Panc1 (cell line): ENCODE measurements at regions of chr14 and their contacts with region 1.

Region 1: GRCh38 chr14:54446161-54446693 is 5.1 kb upstream of the CNIH1 start:
- DNase-seq: no peak
- ATAC-seq: no peak
- H3K4me3 ChIP-seq: no peak overlapping the region
- H3K27ac ChIP-seq: no peak overlapping the region
- H3K4me1 ChIP-seq: no peaks in the 10 kb centered on the region; the same call in 1 of the 2 replicates
- H3K27me3 ChIP-seq: no peaks in the 10 kb centered on the region
- CTCF ChIP-seq: no peak

Region 2: DNA sequence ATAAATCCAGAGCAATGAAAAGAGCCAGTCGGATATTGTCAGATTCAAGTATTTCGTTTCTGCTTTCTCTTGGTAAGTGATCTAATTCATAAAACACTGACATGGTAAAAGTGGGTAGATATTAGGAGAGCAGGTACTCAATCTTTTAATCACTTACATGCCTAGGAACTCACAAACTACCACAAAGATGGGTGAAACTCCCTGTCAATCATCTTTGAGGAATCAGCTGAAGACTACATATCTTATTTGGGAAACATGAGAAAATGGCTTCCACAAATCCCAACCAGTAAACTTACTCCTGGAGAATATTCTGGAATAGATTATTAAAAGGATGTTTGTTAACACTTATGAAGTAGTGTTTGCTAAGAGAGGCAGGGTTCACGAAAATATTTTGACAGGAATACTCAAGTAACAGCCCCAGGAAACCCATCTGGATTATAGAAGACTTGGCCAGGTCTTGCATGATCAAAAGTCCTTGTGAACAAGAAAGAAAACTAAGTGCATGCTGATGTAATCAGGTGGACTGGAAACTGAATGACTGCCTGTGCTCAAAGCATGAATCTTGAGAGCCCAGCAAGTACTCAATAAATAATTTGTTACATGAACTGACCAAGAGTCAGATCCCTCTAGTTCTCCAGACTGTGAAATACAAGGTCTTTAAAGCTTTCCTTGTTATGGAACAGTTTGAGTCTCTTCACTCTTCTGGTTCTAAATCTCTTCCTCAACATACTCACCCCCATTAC is 20.5 kb before region 1 on chr14:
- CTCF ChIA-PET with region 1: interaction called, 12 read pairs
- POLR2A ChIA-PET with region 1: no interaction called
- in situ Hi-C with region 1: no loop called
- intact Hi-C with region 1: no loop called
- DNase-seq: no peak
- ATAC-seq: no peak
- H3K4me3 ChIP-seq: no peak overlapping the region
- H3K27ac ChIP-seq: no peak overlapping the region
- H3K4me1 ChIP-seq: no peaks in the 10 kb centered on the region
- H3K27me3 ChIP-seq: no peaks in the 10 kb centered on the region
- CTCF ChIP-seq: no peak